Activated B cell treated with CpG ODN at 0.5 μM for 24 hours (primary cell): ENCODE measurements at regions of chr14 and their contacts with region 1.

Region 1: GRCh38 chr14:99393047-99393655 is 87.5 kb downstream of the SETD3 start:
- DNase-seq: no peak
- ATAC-seq: peak; percentile 31
- H3K4me3 Mint-ChIP-seq: no peak overlapping the region
- H3K27ac Mint-ChIP-seq: no peak overlapping the region
- H3K4me1 Mint-ChIP-seq: no peaks in the 10 kb centered on the region
- H3K27me3 Mint-ChIP-seq: no peaks in the 10 kb centered on the region
- CTCF ChIP-seq: no peak

Region 2: GRCh38 chr14:99415496-99416281 is 22.5 kb after region 1 on chr14:
- CTCF ChIA-PET with region 1: interaction called, 14 read pairs
- POLR2A ChIA-PET with region 1: no interaction called
- intact Hi-C with region 1: no loop called
- DNase-seq: no peak
- ATAC-seq: peak; percentile 75
- H3K4me3 Mint-ChIP-seq: no peak overlapping the region
- H3K27ac Mint-ChIP-seq: no peak overlapping the region
- H3K4me1 Mint-ChIP-seq: peaks cover 6% of the 10 kb centered on the region
- H3K27me3 Mint-ChIP-seq: no peaks in the 10 kb centered on the region
- CTCF ChIP-seq: no peak

Region 3: GRCh38 chr14:99884834-99885648 is 491.9 kb after region 1 on chr14:
- CTCF ChIA-PET with region 1: interaction called, 4 read pairs
- POLR2A ChIA-PET with region 1: no interaction called
- intact Hi-C with region 1: loop called (anchors 5 kb)
- DNase-seq: no peak
- ATAC-seq: peak; percentile 54
- H3K4me3 Mint-ChIP-seq: no peak overlapping the region
- H3K27ac Mint-ChIP-seq: no peak overlapping the region
- H3K4me1 Mint-ChIP-seq: no peaks in the 10 kb centered on the region
- H3K27me3 Mint-ChIP-seq: peaks cover 18% of the 10 kb centered on the region
- CTCF ChIP-seq: peak; percentile 49